H1 (cell line): ENCODE measurements at regions of chr10 and their contacts with region 1.

Region 1: GRCh38 chr10:100315615-100316014 is 14.4 kb downstream of the PKD2L1 start:
- DNase-seq: no peak
- H3K4me3 ChIP-seq: no peak overlapping the region
- H3K27ac ChIP-seq: no peak overlapping the region
- H3K4me1 ChIP-seq: no peaks in the 10 kb centered on the region
- H3K27me3 ChIP-seq: no peaks in the 10 kb centered on the region; a peak in 1 of 7 replicates
- CTCF ChIP-seq: no peak
- EP300 ChIP-seq: no peak
- POLR2A ChIP-seq: no peak
- RAD21 ChIP-seq: no peak

Region 2: DNA sequence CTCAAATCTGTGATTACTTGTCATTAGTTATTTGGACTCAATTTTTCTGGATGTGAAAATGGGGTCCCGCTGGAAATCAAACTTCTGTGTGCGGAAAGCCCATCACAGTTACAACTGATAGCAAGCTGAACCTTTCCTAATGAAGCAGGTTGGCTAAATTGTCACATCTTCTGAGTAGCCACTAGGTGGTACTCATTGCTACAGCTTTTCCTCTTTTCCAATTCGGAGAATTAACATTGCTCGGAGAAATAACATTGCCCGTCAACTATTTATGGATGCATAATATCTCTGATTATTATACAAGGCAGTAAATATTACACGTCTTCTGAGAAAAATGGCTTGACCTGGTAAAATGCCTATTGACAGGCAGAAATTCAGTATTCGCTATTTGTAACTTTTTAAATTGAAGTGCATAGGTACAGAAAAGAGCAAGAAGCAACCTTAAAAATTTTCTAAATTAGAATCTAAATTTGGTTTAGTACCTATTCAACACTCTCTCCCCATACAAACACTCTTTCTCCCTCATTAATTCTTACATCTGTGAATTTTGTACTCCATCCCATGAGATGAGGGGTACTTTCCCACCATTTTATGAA is 11.8 kb before region 1 on chr10:
- CTCF ChIA-PET with region 1: interaction called, 12 read pairs
- POLR2A ChIA-PET with region 1: no interaction called
- DNase-seq: no peak
- H3K4me3 ChIP-seq: no peak overlapping the region
- H3K27ac ChIP-seq: no peak overlapping the region
- H3K4me1 ChIP-seq: peaks cover 0 to 11% (median 2%) of the 10 kb centered on the region in 4 experiments; a peak in 4 of 7 replicates
- H3K27me3 ChIP-seq: no peaks in the 10 kb centered on the region
- CTCF ChIP-seq: peak in 2 of 3 experiments; percentile 58 to 81; a peak in 3 of 4 replicates
- EP300 ChIP-seq: no peak
- POLR2A ChIP-seq: no peak
- RAD21 ChIP-seq: peak; percentile 73 to 77

Region 3: GRCh38 chr10:100327007-100327717 is 11.5 kb after region 1 on chr10:
- CTCF ChIA-PET with region 1: interaction called, 13 read pairs
- POLR2A ChIA-PET with region 1: interaction called, 4 read pairs
- DNase-seq: no peak
- H3K4me3 ChIP-seq: no peak overlapping the region
- H3K27ac ChIP-seq: no peak overlapping the region
- H3K4me1 ChIP-seq: no peaks in the 10 kb centered on the region; a peak in 1 of 7 replicates
- H3K27me3 ChIP-seq: no peaks in the 10 kb centered on the region; a peak in 3 of 7 replicates
- CTCF ChIP-seq: no peak
- EP300 ChIP-seq: no peak
- POLR2A ChIP-seq: no peak
- RAD21 ChIP-seq: no peak